Activated CD8-positive, alpha-beta T cell treated with anti-CD3 and anti-CD28 coated beads for 36 hours (primary cell): ENCODE measurements at regions of chr18 and their contacts with region 1.

Region 1: GRCh38 chr18:35343936-35344735 is at the start of gene ZNF24:
- DNase-seq: peak; percentile 96
- ATAC-seq: peak; percentile 94
- H3K4me3 Mint-ChIP-seq: peak within 1 kb of the TSS; percentile 92
- H3K27ac Mint-ChIP-seq: peak within 1 kb of the TSS; percentile 95
- H3K4me1 Mint-ChIP-seq: peaks cover 44% of the 10 kb centered on the region
- H3K27me3 Mint-ChIP-seq: no peaks in the 10 kb centered on the region
- CTCF ChIP-seq: no peak
- total RNA-seq, gene ZNF24: 42.7 to 45.1 TPM

Region 2: DNA sequence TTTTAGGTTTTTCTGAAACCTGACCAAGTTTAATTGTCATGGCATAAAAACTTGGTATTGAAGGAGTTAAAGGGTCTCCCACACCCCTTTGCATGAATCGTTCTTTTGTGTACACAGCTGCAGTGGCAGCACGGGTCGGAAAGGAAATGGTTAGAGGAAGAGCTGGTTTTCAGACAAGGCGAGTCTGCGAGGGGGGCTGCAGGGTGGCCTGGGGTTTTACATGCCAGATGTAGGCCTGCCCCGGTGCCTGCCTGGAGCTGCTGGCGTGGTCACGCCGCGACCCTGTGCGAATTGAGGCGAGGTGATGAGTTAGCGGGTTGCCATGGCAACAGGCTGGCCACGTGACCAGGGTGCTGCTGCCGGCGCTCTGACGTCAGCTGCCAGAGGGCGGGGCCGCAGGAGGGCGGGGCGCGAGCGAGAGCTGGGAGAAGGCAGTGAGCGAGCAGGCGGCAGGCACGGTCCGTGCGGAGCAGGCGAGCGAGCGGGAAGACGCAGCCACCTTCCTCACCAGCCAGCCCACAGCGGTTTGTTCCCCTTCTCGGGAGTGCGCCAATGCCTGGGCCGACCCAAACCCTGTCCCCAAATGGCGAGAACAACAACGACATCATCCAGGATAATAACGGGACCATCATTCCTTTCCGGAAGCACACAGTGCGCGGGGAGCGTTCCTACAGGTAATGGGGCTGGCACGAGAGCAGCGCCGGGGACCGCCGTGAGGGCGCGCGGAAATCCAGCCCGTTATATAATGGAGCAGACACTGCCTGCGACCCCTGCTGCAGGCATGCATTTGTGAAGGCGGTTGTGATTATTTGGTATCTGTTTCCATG is 302.9 kb before region 1 on chr18 and contains the start of gene MAPRE2:
- CTCF ChIA-PET with region 1: no interaction called
- POLR2A ChIA-PET with region 1: no interaction called
- intact Hi-C with region 1: loop called (anchors 10 kb)
- DNase-seq: peak; percentile 100
- ATAC-seq: peak; percentile 79
- H3K4me3 Mint-ChIP-seq: peak within 1 kb of the TSS; percentile 85
- H3K27ac Mint-ChIP-seq: peak within 1 kb of the TSS; percentile 98
- H3K4me1 Mint-ChIP-seq: peaks cover 54% of the 10 kb centered on the region
- H3K27me3 Mint-ChIP-seq: no peaks in the 10 kb centered on the region
- CTCF ChIP-seq: peak; percentile 22
- total RNA-seq, gene MAPRE2: 70.7 to 72.7 TPM

Region 3: GRCh38 chr18:35231052-35231451 is 113.1 kb before region 1 on chr18:
- CTCF ChIA-PET with region 1: interaction called, 10 read pairs
- POLR2A ChIA-PET with region 1: interaction called, 3 read pairs
- intact Hi-C with region 1: no loop called
- DNase-seq: peak; percentile 87
- ATAC-seq: peak; percentile 91
- H3K4me3 Mint-ChIP-seq: peak overlapping the region; percentile 63
- H3K27ac Mint-ChIP-seq: no peak overlapping the region
- H3K4me1 Mint-ChIP-seq: peaks cover 3% of the 10 kb centered on the region
- H3K27me3 Mint-ChIP-seq: no peaks in the 10 kb centered on the region
- CTCF ChIP-seq: peak; percentile 95

Region 4: DNA sequence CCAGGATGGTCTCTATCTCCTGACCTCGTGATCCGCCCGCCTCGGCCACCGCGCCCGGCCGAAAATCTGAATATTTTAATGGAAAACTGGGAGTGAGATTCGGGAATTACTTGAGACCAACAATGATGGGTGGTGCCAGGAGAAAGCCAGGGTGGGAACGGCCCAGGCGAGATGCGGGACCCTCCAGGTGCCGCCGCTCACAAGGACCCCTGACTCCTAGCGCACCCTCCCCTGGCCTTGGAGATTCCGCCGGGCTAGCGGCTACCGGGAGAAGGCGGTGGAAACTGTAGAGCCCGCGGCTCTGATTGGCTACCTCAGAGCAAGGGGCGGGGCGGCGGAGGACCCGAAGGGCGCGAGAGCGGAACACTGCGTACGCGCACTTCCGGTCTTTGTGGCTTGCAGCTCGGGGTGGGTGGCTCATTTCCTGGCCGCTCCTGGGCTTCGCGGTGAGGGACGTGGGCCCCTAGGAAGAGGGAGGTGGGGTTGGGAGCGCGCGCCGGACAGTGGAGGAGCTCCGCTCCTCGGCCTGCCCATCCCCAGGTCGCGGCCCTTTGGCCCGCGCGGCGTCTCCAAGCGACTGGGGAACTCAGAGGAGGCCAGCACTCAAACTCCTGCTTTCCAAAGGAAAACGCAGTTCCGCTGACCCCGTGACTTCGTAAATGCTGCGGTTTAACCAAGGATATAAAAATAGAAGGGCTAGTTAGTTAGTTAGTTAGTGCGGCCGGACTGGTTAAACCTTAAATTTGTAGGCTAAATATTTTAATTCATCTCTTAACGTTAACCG is 103.3 kb before region 1 on chr18 and contains the start of gene ZNF397:
- CTCF ChIA-PET with region 1: interaction called, 3 read pairs
- POLR2A ChIA-PET with region 1: interaction called, 3 read pairs
- intact Hi-C with region 1: loop called (anchors 5 kb)
- DNase-seq: peak; percentile 98
- ATAC-seq: peak; percentile 99
- H3K4me3 Mint-ChIP-seq: peak within 1 kb of the TSS; percentile 94
- H3K27ac Mint-ChIP-seq: peak within 1 kb of the TSS; percentile 98
- H3K4me1 Mint-ChIP-seq: peaks cover 32% of the 10 kb centered on the region
- H3K27me3 Mint-ChIP-seq: no peaks in the 10 kb centered on the region
- CTCF ChIP-seq: no peak
- total RNA-seq, gene ZNF397: 17.9 to 18.9 TPM

Region 5: GRCh38 chr18:35355140-35355618 is 11.0 kb after region 1 on chr18:
- CTCF ChIA-PET with region 1: interaction called, 21 read pairs
- POLR2A ChIA-PET with region 1: no interaction called
- intact Hi-C with region 1: no loop called
- DNase-seq: peak; percentile 75
- ATAC-seq: peak; percentile 98
- H3K4me3 Mint-ChIP-seq: no peak overlapping the region
- H3K27ac Mint-ChIP-seq: no peak overlapping the region
- H3K4me1 Mint-ChIP-seq: peaks cover 4% of the 10 kb centered on the region
- H3K27me3 Mint-ChIP-seq: no peaks in the 10 kb centered on the region
- CTCF ChIP-seq: peak; percentile 48